CD8-positive, alpha-beta memory T cell (primary cell): ENCODE measurements at regions of chr1 and their contacts with region 1.

Region 1: GRCh38 chr1:209805875-209806760 is at the start of gene IRF6:
- DNase-seq: peak; percentile 57 to 87 (median 71)
- H3K4me3 ChIP-seq: peak within 1 kb of the TSS; percentile 42
- H3K4me3 Mint-ChIP-seq: peak within 1 kb of the TSS; percentile 85 to 98 (median 93)
- H3K27ac ChIP-seq: peak within 1 kb of the TSS; percentile 52
- H3K27ac Mint-ChIP-seq: peak within 1 kb of the TSS in 7 of 8 donors; percentile 49 to 96 (median 93)
- H3K4me1 ChIP-seq: peaks cover 9% of the 10 kb centered on the region
- H3K4me1 Mint-ChIP-seq: peaks cover 7 to 13% (median 8%) of the 10 kb centered on the region in 3 donors
- H3K27me3 ChIP-seq: no peaks in the 10 kb centered on the region
- H3K27me3 Mint-ChIP-seq: peaks cover 2 to 10% of the 10 kb centered on the region in 2 donors
- total RNA-seq, gene IRF6: 1.2 TPM

Region 2: DNA sequence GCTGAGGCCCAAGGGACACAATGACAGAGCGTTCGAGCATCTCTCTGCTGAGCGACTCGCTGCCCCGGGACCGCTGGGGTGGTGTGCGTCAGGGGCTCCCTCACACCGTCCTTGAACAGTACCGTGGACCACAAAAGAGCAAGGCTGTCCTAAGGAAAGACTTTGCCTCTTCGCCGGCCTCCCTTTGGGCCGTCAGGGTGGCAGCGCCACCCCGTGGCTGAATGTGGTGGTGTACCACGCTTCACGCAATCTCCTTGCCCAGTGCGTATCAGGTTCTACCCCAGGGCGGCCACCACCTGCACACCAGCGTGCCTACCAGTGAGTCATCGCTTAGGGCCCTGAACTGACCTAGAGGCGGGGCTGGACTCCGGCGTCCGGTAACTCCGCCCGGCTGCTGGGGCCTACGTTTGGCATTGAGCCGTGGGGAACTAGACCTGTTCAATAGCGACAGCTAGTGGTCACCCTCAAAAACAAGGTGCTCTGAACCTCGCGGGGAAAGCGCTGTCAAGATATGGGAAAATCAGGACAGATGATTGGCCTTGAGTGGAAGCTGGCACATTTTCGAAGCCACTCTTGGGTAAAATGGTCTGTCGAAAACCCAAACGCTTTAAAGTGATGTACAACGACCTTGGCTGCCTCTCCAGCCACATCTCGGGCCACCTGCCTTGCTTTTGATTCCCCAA is 58.4 kb before region 1 on chr1:
- CTCF ChIA-PET with region 1: interaction called, 5 read pairs
- POLR2A ChIA-PET with region 1: interaction called, 12 read pairs
- DNase-seq: peak; percentile 71 to 87 (median 82)
- H3K4me3 ChIP-seq: peak overlapping the region; percentile 76
- H3K4me3 Mint-ChIP-seq: peak overlapping the region; percentile 75 to 92 (median 86)
- H3K27ac ChIP-seq: peak overlapping the region; percentile 43
- H3K27ac Mint-ChIP-seq: peak overlapping the region; percentile 83 to 97 (median 88)
- H3K4me1 ChIP-seq: peaks cover 54% of the 10 kb centered on the region
- H3K4me1 Mint-ChIP-seq: peaks cover 47 to 60% (median 53%) of the 10 kb centered on the region in 3 donors
- H3K27me3 ChIP-seq: no peaks in the 10 kb centered on the region
- H3K27me3 Mint-ChIP-seq: no peaks in the 10 kb centered on the region

Region 3: GRCh38 chr1:209827384-209828262 is 21.5 kb after region 1 on chr1 and contains the start of gene UTP25:
- CTCF ChIA-PET with region 1: interaction called, 43 read pairs
- POLR2A ChIA-PET with region 1: no interaction called
- DNase-seq: peak; percentile 83 to 94 (median 91)
- H3K4me3 ChIP-seq: peak within 1 kb of the TSS; percentile 99
- H3K4me3 Mint-ChIP-seq: peak within 1 kb of the TSS; percentile 90 to 97 (median 96)
- H3K27ac ChIP-seq: peak within 1 kb of the TSS; percentile 90
- H3K27ac Mint-ChIP-seq: peak within 1 kb of the TSS; percentile 74 to 98 (median 90)
- H3K4me1 ChIP-seq: peaks cover 29% of the 10 kb centered on the region
- H3K4me1 Mint-ChIP-seq: peaks cover 46 to 50% (median 47%) of the 10 kb centered on the region in 3 donors
- H3K27me3 ChIP-seq: no peaks in the 10 kb centered on the region
- H3K27me3 Mint-ChIP-seq: peaks cover 7 to 11% of the 10 kb centered on the region in 2 donors
- total RNA-seq, gene UTP25: 14.9 to 15.2 TPM

Region 4: GRCh38 chr1:209850342-209850979 is 44.3 kb after region 1 on chr1:
- CTCF ChIA-PET with region 1: no interaction called
- POLR2A ChIA-PET with region 1: no interaction called
- DNase-seq: no peak
- H3K4me3 ChIP-seq: no peak overlapping the region
- H3K4me3 Mint-ChIP-seq: no peak overlapping the region
- H3K27ac ChIP-seq: no peak overlapping the region
- H3K27ac Mint-ChIP-seq: peak overlapping the region in 4 of 8 donors; percentile 9 to 42 (median 26)
- H3K4me1 ChIP-seq: no peaks in the 10 kb centered on the region
- H3K4me1 Mint-ChIP-seq: peaks cover 2 to 12% (median 10%) of the 10 kb centered on the region in 3 donors
- H3K27me3 ChIP-seq: no peaks in the 10 kb centered on the region
- H3K27me3 Mint-ChIP-seq: no peaks in the 10 kb centered on the region

Region 5: GRCh38 chr1:209956116-209956515 is 150.0 kb after region 1 on chr1:
- CTCF ChIA-PET with region 1: no interaction called
- POLR2A ChIA-PET with region 1: no interaction called
- DNase-seq: no peak
- H3K4me3 ChIP-seq: no peak overlapping the region
- H3K4me3 Mint-ChIP-seq: no peak overlapping the region
- H3K27ac ChIP-seq: no peak overlapping the region
- H3K27ac Mint-ChIP-seq: no peak overlapping the region
- H3K4me1 ChIP-seq: no peaks in the 10 kb centered on the region
- H3K4me1 Mint-ChIP-seq: no peaks in the 10 kb centered on the region
- H3K27me3 ChIP-seq: no peaks in the 10 kb centered on the region
- H3K27me3 Mint-ChIP-seq: peaks cover 2 to 29% of the 10 kb centered on the region in 2 donors

Region 6: GRCh38 chr1:210076620-210077019 is 270.5 kb after region 1 on chr1:
- CTCF ChIA-PET with region 1: no interaction called
- POLR2A ChIA-PET with region 1: no interaction called
- DNase-seq: no peak
- H3K4me3 ChIP-seq: no peak overlapping the region
- H3K4me3 Mint-ChIP-seq: no peak overlapping the region
- H3K27ac ChIP-seq: no peak overlapping the region
- H3K27ac Mint-ChIP-seq: no peak overlapping the region
- H3K4me1 ChIP-seq: no peaks in the 10 kb centered on the region
- H3K4me1 Mint-ChIP-seq: no peaks in the 10 kb centered on the region
- H3K27me3 ChIP-seq: peaks cover 4% of the 10 kb centered on the region
- H3K27me3 Mint-ChIP-seq: peaks cover 0 to 2% of the 10 kb centered on the region in 2 donors